ENCODE measurements at regions of chr22 and their contacts with region 1.

Region 1: DNA sequence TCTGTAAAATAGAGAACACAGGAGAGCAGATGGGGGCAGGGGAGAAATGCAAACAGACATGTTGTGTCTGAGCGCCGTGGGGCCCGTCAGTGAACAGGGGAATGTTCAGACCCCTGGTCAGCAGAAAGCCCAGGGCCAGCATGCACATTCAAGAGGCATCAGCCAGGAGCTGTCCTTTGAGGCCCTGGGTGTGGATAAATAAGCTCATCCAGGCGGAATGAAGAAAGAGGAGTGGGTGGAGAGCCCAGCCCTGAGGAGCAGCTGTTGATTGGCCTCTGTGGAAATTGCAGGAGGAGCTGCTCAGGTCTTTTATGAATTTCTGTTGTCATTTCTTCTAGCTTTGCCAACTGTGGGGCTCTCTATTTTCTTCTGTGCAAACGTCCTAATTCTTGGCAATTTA is 49.7 kb upstream of the CECR2 start:
- DNase-seq: no peak
- ATAC-seq: no peak
- H3K4me3 ChIP-seq: no peak overlapping the region
- H3K27ac ChIP-seq: no peak overlapping the region
- H3K4me1 ChIP-seq: no peaks in the 10 kb centered on the region
- H3K27me3 ChIP-seq: no peaks in the 10 kb centered on the region
- CTCF ChIP-seq: no peak

Region 2: DNA sequence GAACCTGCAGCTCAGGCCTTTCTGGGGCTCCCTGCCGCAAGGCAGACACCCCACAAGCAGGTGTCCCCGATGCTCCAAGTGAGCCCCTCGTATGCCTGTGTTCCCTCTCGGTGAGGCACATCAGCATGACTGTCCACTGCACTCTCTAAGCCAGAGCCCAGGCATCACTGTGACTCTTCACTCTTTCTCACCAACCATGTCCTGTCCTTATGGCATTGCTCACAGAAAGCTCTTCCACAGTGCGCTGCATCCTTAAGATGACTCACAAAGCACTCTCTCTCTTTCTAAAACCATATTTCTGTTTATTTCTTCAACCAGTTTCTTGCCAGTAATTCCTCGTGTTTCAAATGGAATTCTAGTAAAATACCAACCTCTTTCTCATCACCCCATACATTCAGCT is 329.6 kb before region 1 on chr22:
- CTCF ChIA-PET with region 1: interaction called, 13 read pairs
- POLR2A ChIA-PET with region 1: no interaction called
- in situ Hi-C with region 1: no loop called
- intact Hi-C with region 1: no loop called
- DNase-seq: no peak
- ATAC-seq: no peak
- H3K4me3 ChIP-seq: no peak overlapping the region
- H3K27ac ChIP-seq: no peak overlapping the region
- H3K4me1 ChIP-seq: no peaks in the 10 kb centered on the region
- H3K27me3 ChIP-seq: no peaks in the 10 kb centered on the region
- CTCF ChIP-seq: no peak

Region 3: GRCh38 chr22:17234144-17234623 is 85.4 kb before region 1 on chr22:
- CTCF ChIA-PET with region 1: no interaction called
- POLR2A ChIA-PET with region 1: no interaction called
- in situ Hi-C with region 1: no loop called
- intact Hi-C with region 1: no loop called
- DNase-seq: no peak
- ATAC-seq: no peak
- H3K4me3 ChIP-seq: no peak overlapping the region
- H3K27ac ChIP-seq: no peak overlapping the region
- H3K4me1 ChIP-seq: no peaks in the 10 kb centered on the region
- H3K27me3 ChIP-seq: no peaks in the 10 kb centered on the region
- CTCF ChIP-seq: no peak